Activated CD4-positive, alpha-beta memory T cell treated with anti-CD3 and anti-CD28 coated beads for 36 hours (primary cell): ENCODE measurements at regions of chr2 and their contacts with region 1.

Region 1: DNA sequence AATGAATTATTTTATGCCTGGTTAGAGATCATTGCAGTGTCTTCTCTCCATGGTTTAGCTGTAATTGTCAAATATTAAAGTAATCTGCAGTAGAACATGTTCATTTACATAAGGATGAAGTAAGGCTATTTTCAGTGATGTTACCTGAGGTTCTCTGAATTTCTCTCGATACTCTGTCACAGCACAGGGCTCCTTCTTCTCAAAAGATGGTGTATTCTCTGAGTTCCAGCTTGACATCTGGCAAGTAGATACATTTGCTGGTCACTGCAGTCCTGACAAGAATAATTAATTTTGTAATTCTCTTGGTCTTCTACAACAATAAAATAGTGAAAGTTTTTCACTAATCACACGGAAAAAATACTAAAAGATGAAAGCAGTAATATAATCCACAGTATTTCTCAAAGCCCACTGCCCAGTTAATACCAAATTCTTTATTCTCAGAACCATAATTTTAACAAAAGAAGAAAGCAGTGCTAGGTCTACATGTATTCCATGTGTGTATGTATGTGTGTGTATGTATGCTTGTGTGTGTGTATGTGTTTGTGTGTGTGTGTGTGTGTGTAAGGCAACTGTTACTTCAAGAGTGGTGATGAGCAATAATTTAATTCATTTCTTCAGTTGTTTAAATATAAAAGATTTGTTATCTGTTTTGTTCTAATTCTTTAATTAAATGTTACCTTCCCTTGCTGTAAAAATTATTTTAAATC is 1165.5 kb upstream of the SLC39A10 start:
- DNase-seq: no peak
- H3K4me3 Mint-ChIP-seq: no peak overlapping the region
- H3K27ac Mint-ChIP-seq: no peak overlapping the region
- H3K4me1 Mint-ChIP-seq: no peaks in the 10 kb centered on the region
- H3K27me3 Mint-ChIP-seq: no peaks in the 10 kb centered on the region

Region 2: DNA sequence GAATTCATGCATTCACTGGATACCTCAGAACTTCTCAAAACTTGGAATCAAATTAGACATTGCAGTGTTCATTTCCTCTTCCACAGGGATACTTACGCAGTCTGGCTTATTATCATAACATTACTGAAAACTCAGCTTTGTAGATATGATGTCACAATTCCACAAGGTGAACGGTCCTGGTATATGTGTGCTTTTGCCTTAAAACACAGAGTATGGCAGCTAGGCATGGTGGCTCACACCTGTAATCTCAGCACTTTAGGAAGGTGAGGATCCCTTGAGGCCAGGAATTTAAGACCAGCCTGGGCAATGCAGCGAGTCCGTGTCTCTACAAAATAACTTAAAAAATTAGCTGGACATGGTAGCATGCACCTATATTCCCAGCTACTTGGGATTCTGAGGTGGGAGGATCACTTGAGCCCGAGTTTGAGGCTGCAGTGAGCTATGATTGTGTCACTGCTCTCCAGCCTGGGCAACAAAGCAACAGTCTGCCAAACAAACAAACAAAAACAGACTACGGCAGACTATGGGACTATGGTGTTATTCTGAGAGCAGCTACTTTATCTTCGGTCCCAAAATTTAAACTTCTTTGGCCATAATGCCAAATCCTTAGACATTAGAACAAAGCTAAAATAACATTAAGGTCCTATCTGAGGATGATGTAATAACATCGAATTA is 26.5 kb before region 1 on chr2:
- CTCF ChIA-PET with region 1: no interaction called
- POLR2A ChIA-PET with region 1: no interaction called
- intact Hi-C with region 1: loop called (anchors 2 kb)
- DNase-seq: peak; percentile 11
- H3K4me3 Mint-ChIP-seq: no peak overlapping the region
- H3K27ac Mint-ChIP-seq: no peak overlapping the region
- H3K4me1 Mint-ChIP-seq: no peaks in the 10 kb centered on the region
- H3K27me3 Mint-ChIP-seq: no peaks in the 10 kb centered on the region